CD4-positive, alpha-beta memory T cell (primary cell): ENCODE measurements at regions of chr2 and their contacts with region 1.

Region 1: GRCh38 chr2:136057023-136057801 is 60.7 kb downstream of the CXCR4 start:
- DNase-seq: peak; percentile 17 to 52 (median 37)
- H3K4me3 ChIP-seq: peak overlapping the region in 1 of 2 donors; percentile 6
- H3K4me3 Mint-ChIP-seq: peak overlapping the region in 7 of 8 donors; percentile 60 to 73 (median 69)
- H3K27ac ChIP-seq: peak overlapping the region; percentile 42
- H3K27ac Mint-ChIP-seq: peak overlapping the region; percentile 59 to 92 (median 90)
- H3K4me1 ChIP-seq: peaks cover 71% of the 10 kb centered on the region
- H3K4me1 Mint-ChIP-seq: peaks cover 51 to 80% (median 61%) of the 10 kb centered on the region in 4 donors
- H3K27me3 ChIP-seq: no peaks in the 10 kb centered on the region
- H3K27me3 Mint-ChIP-seq: no peaks in the 10 kb centered on the region

Region 2: DNA sequence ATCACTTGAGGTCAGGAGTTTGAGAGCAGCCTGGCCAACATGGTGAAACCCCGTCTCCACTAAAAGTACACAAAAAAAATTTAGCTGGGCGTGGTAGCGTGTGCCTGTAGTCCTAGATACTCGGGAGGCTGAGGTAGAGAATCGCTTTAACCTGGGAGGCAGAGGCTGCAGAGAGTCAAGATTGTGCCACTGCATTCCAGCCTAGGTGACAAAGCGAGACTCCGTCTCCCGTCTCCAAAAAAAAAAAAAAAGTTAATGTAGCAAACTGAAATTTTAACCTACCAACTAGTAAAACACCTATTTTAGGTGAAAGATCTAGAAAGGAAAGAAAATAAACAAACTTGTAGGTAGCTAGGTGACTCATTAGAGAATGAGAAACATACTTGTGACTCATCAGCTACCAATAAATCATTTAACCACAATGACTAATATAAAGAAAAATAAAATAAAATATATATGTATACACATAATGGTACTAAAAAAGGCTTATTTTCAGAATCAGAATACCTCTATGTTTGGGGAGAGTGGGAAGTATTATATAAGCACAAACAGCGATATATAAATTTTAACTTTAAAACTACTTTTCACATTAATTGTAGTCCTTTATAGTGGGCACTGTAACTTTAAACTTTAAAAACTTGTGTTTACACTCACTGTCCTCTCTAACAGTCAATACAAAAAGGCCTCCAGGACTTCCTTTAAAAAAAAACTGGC is 108.4 kb before region 1 on chr2:
- CTCF ChIA-PET with region 1: no interaction called
- POLR2A ChIA-PET with region 1: no interaction called
- intact Hi-C with region 1: loop called (anchors 5 kb)
- DNase-seq: peak; percentile 45 to 68 (median 58)
- H3K4me3 ChIP-seq: no peak overlapping the region
- H3K4me3 Mint-ChIP-seq: peak overlapping the region; percentile 38 to 80 (median 68)
- H3K27ac ChIP-seq: peak overlapping the region; percentile 61
- H3K27ac Mint-ChIP-seq: peak overlapping the region; percentile 81 to 95 (median 92)
- H3K4me1 ChIP-seq: peaks cover 36% of the 10 kb centered on the region
- H3K4me1 Mint-ChIP-seq: peaks cover 36 to 72% (median 53%) of the 10 kb centered on the region in 4 donors
- H3K27me3 ChIP-seq: no peaks in the 10 kb centered on the region
- H3K27me3 Mint-ChIP-seq: no peaks in the 10 kb centered on the region